Dendritic cell treated with granulocyte-macrophage colony-stimulating factor and Interleukin-4, amounts not matched to agents 40 ng/mL and 50 ng/mL, for 4 days (primary cell): ENCODE measurements at regions of chr1 and their contacts with region 1.

Region 1: DNA sequence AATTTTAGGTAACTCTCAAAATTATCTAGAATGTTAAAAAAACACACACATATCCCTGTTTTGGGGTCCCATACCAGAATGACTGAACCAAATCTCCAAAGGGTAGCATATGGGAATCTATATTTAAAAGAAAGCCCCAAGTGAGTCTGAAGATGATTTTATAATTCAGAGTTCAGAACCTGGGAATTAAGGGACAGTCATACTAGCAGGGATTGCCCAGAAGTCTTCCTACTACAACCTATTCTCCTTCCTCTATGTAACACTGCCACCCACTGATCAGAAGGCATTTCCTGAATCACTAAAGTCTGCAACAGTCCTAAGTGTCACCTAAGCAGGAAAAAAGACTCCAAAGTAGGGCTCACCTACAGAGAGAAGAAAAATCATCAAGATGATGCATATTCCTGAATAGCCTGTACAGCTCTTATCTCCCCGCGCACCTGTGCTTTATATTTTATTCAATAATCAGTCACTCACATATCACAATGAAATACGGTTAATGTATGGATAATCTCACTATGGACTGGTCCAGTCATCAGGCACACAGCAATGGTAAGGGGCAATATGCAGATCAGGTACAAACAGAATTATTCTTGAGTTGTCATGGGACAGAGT is 4.9 kb downstream of the RGS1 start:
- H3K4me3 Mint-ChIP-seq: no peak overlapping the region
- H3K27ac Mint-ChIP-seq: no peak overlapping the region
- H3K4me1 Mint-ChIP-seq: peaks cover 6% of the 10 kb centered on the region
- H3K27me3 Mint-ChIP-seq: no peaks in the 10 kb centered on the region

Region 2: DNA sequence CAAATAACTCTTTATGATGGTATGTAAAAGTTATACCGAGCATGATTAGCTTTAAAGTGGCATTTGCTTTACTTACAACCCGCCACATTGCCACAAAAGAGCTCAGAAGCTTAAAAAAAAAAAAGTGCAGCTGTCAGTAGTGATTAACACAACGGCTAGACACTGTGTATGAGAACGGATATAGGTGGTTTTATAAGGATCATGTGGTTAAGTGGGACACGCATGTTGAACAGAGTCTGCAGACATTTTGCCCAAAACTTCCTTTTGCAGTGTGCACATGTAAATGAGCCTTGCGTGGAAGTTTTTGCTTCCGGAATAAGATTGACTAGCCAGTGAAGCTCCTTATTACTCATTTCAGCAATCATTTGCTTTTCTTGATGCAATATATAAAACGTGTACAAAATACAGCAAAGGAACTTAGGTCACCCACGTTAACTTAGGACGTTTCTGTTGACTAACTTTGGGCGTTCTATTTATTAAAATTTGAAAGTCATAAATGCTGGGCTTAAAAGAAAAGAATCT is 63.6 kb before region 1 on chr1:
- intact Hi-C with region 1: loop called (anchors 2 kb)
- H3K4me3 Mint-ChIP-seq: peak overlapping the region; percentile 54
- H3K27ac Mint-ChIP-seq: peak overlapping the region; percentile 79
- H3K4me1 Mint-ChIP-seq: peaks cover 42% of the 10 kb centered on the region
- H3K27me3 Mint-ChIP-seq: no peaks in the 10 kb centered on the region

Region 3: DNA sequence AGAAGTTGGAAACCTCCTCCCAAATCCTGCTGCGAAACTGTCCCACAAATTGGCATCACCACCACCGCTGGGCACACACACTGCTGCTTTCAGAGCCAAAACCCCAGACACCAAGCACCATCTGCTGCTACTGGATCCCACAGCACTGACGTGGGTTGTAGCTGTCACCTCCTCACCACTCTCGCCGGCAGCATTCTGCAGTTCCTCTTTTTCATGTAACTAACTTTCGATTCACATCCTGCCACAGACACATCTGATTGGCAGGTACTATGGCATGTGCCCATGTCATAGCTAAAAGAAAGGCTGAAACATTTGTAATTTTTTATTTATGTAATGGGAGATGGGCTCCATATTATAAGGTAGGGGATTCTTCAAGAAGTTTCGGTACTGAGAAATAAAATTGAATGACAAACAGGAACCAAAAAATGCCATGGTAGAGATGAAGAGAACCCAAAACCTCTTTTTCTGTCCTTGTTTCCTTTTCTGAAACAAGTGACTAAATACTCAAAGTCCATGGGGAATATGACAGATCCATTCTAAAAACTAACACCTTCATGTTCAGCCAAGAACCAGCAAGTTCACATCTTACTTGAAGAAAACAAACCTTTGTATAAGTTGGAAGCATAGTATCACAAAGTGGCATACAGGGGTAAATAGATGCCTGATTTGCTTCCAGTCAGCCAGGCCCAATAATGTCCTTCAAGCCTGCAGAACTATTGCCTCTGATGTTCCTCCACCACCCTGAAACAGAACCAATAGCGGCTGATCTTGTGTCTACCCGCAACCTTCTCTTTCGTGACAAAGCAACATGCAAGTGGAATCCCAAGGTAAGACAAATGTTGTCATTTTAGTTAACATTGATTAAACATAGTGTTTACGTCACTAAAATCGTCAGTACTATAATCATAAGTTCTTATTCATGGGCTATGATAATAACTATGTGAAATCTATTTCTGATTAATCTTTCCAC is 28.9 kb after region 1 on chr1:
- intact Hi-C with region 1: loop called (anchors 2 kb)
- H3K4me3 Mint-ChIP-seq: peak overlapping the region; percentile 9
- H3K27ac Mint-ChIP-seq: peak overlapping the region; percentile 56
- H3K4me1 Mint-ChIP-seq: peaks cover 21% of the 10 kb centered on the region
- H3K27me3 Mint-ChIP-seq: peaks cover 10% of the 10 kb centered on the region